Heart right ventricle (tissue), 16 donors: ENCODE measurements at regions of chr2 and their contacts with region 1.

Region 1: DNA sequence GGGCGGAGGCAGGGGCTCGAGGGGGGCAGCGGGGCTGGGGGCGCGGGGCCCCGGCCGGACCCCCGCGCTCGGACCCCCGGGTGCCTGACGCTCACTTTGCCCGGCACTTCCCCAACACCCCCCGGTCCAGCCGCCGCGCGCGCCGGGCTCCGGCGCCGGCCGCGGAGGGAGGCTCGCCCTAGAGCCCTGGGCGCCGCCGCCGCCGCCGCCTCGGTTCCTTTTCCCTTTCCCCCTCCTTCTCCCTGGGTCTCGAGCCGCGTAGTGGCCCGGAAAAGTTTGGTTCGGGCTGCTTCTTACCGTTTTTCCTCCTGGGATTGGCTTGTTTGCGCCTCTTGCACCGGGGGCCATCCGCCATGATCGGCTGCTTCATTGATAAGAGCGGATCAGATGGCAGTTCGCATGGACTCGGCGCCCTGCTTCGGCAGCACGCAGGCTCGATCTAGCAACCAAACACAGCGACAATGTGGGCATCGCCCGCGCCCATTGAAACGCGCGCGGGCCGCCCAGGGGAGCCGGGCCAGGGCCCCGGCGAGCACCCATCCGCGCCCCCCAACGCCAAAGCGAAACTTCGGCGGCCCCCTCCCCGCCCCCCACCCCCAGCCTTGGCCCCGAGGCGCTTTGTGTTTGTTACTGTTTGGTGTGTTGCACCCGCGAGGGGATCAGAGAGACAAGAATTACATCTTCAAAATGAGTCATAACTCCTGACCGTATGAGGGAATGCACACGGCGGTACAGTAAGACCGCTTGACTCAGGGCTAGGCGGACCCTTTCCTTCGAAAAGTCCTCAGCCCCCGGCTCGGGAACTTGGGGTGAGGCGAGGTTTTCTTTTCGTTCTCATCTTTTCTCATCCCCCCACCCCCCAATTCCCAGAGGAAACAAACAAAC is 2.7 kb downstream of the ZEB2 start:
- DNase-seq: peak; percentile 49 to 68
- ATAC-seq: peak; percentile 15 to 75 (median 38)
- H3K4me3 ChIP-seq: peak overlapping the region; percentile 69 to 98 (median 79)
- H3K27ac ChIP-seq: peak overlapping the region; percentile 96 to 100 (median 98)
- H3K4me1 ChIP-seq: peaks cover 0 to 43% (median 15%) of the 10 kb centered on the region in 9 donors
- H3K27me3 ChIP-seq: peaks cover 0 to 8% (median 3%) of the 10 kb centered on the region in 7 donors
- CTCF ChIP-seq: no peak

Region 2: GRCh38 chr2:143936848-143937722 is 580.1 kb before region 1 on chr2:
- intact Hi-C with region 1: loop called in 2 of 10 experiments (anchors 10 kb)
- DNase-seq: peak; percentile 10 to 35
- ATAC-seq: peak; percentile 60 to 82 (median 76)
- H3K4me3 ChIP-seq: peak overlapping the region; percentile 27 to 64 (median 58)
- H3K27ac ChIP-seq: peak overlapping the region in 9 of 10 donors; percentile 11 to 81 (median 62)
- H3K4me1 ChIP-seq: peaks cover 0 to 22% (median 0%) of the 10 kb centered on the region in 9 donors
- H3K27me3 ChIP-seq: peaks cover 0 to 40% (median 6%) of the 10 kb centered on the region in 7 donors
- CTCF ChIP-seq: no peak

Region 3: GRCh38 chr2:144449028-144449406 is 68.2 kb before region 1 on chr2:
- intact Hi-C with region 1: loop called in 4 of 10 experiments (anchors 5 to 10 kb)
- DNase-seq: peak in 1 of 2 donors; percentile 21
- ATAC-seq: peak; percentile 30 to 73 (median 52)
- H3K4me3 ChIP-seq: peak overlapping the region in 6 of 10 donors; percentile 5 to 28 (median 19)
- H3K27ac ChIP-seq: peak overlapping the region in 8 of 10 donors; percentile 38 to 75 (median 68)
- H3K4me1 ChIP-seq: peaks cover 4 to 95% (median 49%) of the 10 kb centered on the region in 9 donors
- H3K27me3 ChIP-seq: no peaks in the 10 kb centered on the region
- CTCF ChIP-seq: peak; percentile 13 to 62 (median 46)

Region 4: DNA sequence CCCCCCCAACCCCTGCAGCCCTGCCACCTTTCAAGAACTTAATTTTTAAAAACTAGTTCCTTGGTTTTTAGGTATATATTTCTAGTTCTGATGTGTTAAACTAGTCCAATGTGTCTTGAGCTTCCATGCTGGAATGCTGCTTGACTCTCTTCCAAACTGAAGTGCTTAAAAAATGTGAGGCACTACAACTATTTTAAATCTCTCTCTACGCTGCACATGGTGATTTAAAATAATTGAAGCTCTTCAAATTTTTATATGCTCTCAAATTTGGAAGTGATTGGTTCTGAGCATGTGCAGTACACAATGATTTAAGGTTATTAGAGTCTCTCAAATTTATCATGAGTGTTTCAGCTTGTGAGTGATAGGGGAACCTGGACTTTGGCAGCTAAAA is 195.3 kb after region 1 on chr2:
- intact Hi-C with region 1: loop called in 1 of 10 experiments (anchors 10 kb)
- DNase-seq: no peak
- ATAC-seq: no peak
- H3K4me3 ChIP-seq: no peak overlapping the region
- H3K27ac ChIP-seq: no peak overlapping the region
- H3K4me1 ChIP-seq: peaks cover 0 to 15% (median 10%) of the 10 kb centered on the region in 9 donors
- H3K27me3 ChIP-seq: no peaks in the 10 kb centered on the region
- CTCF ChIP-seq: no peak

Region 5: DNA sequence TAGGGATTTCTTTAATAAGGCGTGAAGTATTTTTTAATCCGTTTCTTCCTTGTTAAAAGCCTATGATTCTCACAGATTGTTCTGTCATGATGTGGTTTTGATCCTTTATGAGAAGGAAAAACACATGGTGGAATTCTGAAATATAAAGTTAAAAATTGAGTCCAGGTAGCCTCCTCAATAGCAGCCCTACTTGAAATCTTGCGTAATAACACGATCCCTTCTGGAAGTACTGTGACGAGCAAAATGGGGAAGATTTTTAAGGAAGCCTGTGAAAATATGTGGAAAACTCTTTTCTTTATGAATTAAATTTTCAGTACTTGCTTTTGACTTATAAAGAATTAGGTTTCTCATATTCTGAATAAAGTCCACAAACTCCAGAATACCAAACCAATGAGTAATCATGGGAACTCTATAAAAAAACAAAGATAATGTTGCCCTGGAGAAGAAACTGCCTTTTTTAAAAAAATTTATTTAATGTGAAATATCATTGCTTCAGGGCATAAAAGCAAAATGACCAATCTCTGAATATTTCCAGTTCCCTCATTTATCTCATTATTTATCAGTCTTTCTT is 479.1 kb after region 1 on chr2:
- intact Hi-C with region 1: loop called in 2 of 10 experiments (anchors 5 to 10 kb)
- DNase-seq: no peak
- ATAC-seq: no peak
- H3K4me3 ChIP-seq: peak overlapping the region in 3 of 10 donors; percentile 2 to 21 (median 14)
- H3K27ac ChIP-seq: peak overlapping the region in 9 of 10 donors; percentile 16 to 77 (median 65)
- H3K4me1 ChIP-seq: peaks cover 0 to 22% (median 4%) of the 10 kb centered on the region in 9 donors
- H3K27me3 ChIP-seq: no peaks in the 10 kb centered on the region
- CTCF ChIP-seq: no peak

Region 6: DNA sequence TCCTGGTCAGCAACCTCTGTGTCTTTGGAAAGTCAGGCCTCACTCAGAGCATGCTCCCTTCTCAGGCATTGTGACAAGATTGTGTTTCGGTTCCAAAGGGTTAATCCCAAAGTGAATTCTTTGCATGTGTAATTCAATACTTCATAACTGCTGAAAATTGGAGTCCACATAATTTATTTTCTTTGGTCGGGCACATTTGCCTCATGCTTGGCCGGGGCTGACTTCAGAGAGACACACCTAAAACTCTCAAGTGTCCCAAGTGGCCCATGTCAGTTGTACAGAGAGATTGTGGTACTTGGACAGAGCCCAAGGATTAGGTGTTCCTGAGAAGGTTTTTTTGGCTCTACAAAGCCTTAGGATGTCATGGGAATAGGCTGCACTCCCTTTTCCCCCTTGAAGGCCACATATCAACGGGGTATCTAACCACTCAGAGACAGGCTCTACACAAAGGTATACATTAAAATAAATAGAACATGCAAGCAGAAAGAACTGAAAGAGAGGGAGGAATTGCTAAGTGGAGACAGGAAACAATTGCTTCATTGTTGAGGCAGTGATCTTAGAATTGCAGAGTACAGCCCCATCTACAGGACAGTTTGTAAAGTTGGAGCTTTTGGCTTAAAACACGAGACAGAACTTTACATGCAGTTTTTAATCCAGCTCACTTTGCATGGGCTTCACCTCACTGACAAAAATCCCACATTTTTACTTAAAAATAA is 1235.0 kb after region 1 on chr2:
- intact Hi-C with region 1: loop called in 3 of 10 experiments (anchors 5 to 10 kb)
- DNase-seq: peak in 1 of 2 donors; percentile 26
- ATAC-seq: peak; percentile 64 to 86 (median 82)
- H3K4me3 ChIP-seq: peak overlapping the region in 3 of 10 donors; percentile 8 to 21 (median 19)
- H3K27ac ChIP-seq: peak overlapping the region in 8 of 10 donors; percentile 27 to 81 (median 50)
- H3K4me1 ChIP-seq: peaks cover 0 to 40% (median 20%) of the 10 kb centered on the region in 9 donors
- H3K27me3 ChIP-seq: no peaks in the 10 kb centered on the region
- CTCF ChIP-seq: peak; percentile 25 to 70 (median 64)